ENCODE measurements at regions of chr1 and their contacts with region 1.

Region 1: DNA sequence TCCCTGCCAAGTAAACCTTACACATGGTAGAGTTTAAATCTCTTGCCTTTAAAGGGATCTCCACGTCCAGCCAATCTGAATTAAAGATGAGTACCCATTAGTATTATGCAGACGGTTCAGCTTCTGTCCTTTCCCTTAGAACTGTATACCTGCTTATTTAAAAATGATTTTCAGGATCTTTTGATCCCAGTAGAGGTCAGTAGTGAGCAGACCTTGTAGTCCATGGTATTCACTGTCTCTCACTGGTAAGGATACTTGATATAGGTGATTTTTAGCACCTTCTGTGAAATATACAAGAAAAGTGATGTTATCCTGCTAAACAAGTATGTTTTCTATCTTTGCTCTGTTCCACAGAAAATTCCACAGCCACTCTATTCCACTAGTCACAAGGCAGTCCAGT is 1211.6 kb upstream of the ADGRL4 start:
- DNase-seq: peak; percentile 76
- H3K4me3 Mint-ChIP-seq: no peak overlapping the region
- H3K27ac Mint-ChIP-seq: peak overlapping the region; percentile 91
- H3K4me1 Mint-ChIP-seq: peaks cover 13% of the 10 kb centered on the region
- H3K27me3 Mint-ChIP-seq: no peaks in the 10 kb centered on the region
- CTCF ChIP-seq: peak; percentile 59

Region 2: GRCh38 chr1:79259388-79260336 is 958.5 kb before region 1 on chr1:
- CTCF ChIA-PET with region 1: interaction called, 4 read pairs
- POLR2A ChIA-PET with region 1: no interaction called
- intact Hi-C with region 1: loop called (anchors 5 kb)
- DNase-seq: peak; percentile 57
- H3K4me3 Mint-ChIP-seq: no peak overlapping the region
- H3K27ac Mint-ChIP-seq: no peak overlapping the region
- H3K4me1 Mint-ChIP-seq: no peaks in the 10 kb centered on the region
- H3K27me3 Mint-ChIP-seq: no peaks in the 10 kb centered on the region
- CTCF ChIP-seq: peak; percentile 62

Region 3: GRCh38 chr1:80375677-80376076 is 157.6 kb after region 1 on chr1:
- CTCF ChIA-PET with region 1: no interaction called
- POLR2A ChIA-PET with region 1: no interaction called
- intact Hi-C with region 1: no loop called
- DNase-seq: peak; percentile 47
- H3K4me3 Mint-ChIP-seq: no peak overlapping the region
- H3K27ac Mint-ChIP-seq: peak overlapping the region; percentile 2
- H3K4me1 Mint-ChIP-seq: peaks cover 16% of the 10 kb centered on the region
- H3K27me3 Mint-ChIP-seq: no peaks in the 10 kb centered on the region
- CTCF ChIP-seq: no peak

Region 4: GRCh38 chr1:80427881-80428280 is 209.8 kb after region 1 on chr1:
- CTCF ChIA-PET with region 1: no interaction called
- POLR2A ChIA-PET with region 1: no interaction called
- intact Hi-C with region 1: loop called (anchors 10 kb)
- DNase-seq: no peak
- H3K4me3 Mint-ChIP-seq: no peak overlapping the region
- H3K27ac Mint-ChIP-seq: no peak overlapping the region
- H3K4me1 Mint-ChIP-seq: no peaks in the 10 kb centered on the region
- H3K27me3 Mint-ChIP-seq: no peaks in the 10 kb centered on the region
- CTCF ChIP-seq: no peak

Region 5: DNA sequence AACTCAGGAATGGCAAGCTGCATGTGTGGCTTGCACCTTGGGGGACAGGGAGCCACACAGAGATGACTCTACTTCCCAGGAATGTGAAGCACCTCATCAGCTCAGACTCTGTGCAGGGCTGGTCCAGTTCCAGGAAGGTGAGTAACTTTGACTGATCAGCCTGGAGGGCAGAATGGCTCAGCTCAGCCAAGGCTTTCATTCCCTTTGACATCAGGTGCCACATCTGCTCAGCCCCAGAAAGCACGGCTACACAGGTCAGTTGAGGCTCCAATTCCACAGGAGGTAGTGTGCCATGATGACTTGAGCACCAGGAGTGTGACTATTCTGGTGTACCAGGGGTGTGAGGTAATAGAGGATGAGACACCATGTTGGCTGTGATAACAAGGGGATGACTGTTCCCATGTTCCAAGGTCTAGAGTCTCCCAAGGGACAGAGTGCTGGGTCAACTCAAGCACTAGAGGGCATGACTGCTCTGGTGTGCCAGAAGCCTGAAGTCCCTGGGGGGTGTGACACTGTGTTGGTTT is 956.8 kb after region 1 on chr1:
- CTCF ChIA-PET with region 1: no interaction called
- POLR2A ChIA-PET with region 1: no interaction called
- intact Hi-C with region 1: loop called (anchors 2 kb)
- DNase-seq: peak; percentile 98
- H3K4me3 Mint-ChIP-seq: peak overlapping the region; percentile 16
- H3K27ac Mint-ChIP-seq: peak overlapping the region; percentile 74
- H3K4me1 Mint-ChIP-seq: peaks cover 36% of the 10 kb centered on the region
- H3K27me3 Mint-ChIP-seq: no peaks in the 10 kb centered on the region
- CTCF ChIP-seq: no peak

Region 6: GRCh38 chr1:81549604-81550127 is 1331.6 kb after region 1 on chr1:
- CTCF ChIA-PET with region 1: no interaction called
- POLR2A ChIA-PET with region 1: no interaction called
- intact Hi-C with region 1: loop called (anchors 5 kb)
- DNase-seq: peak; percentile 61
- H3K4me3 Mint-ChIP-seq: no peak overlapping the region
- H3K27ac Mint-ChIP-seq: no peak overlapping the region
- H3K4me1 Mint-ChIP-seq: no peaks in the 10 kb centered on the region
- H3K27me3 Mint-ChIP-seq: no peaks in the 10 kb centered on the region
- CTCF ChIP-seq: peak; percentile 60

Region 7: GRCh38 chr1:81800695-81801650 is 1582.9 kb after region 1 on chr1 and contains the start of gene ADGRL2:
- CTCF ChIA-PET with region 1: no interaction called
- POLR2A ChIA-PET with region 1: interaction called, 4 read pairs
- intact Hi-C with region 1: loop called (anchors 5 kb)
- DNase-seq: peak; percentile 93
- H3K4me3 Mint-ChIP-seq: peak within 1 kb of the TSS; percentile 98
- H3K27ac Mint-ChIP-seq: peak within 1 kb of the TSS; percentile 69
- H3K4me1 Mint-ChIP-seq: peaks cover 7% of the 10 kb centered on the region
- H3K27me3 Mint-ChIP-seq: peaks cover 33% of the 10 kb centered on the region
- CTCF ChIP-seq: no peak
- total RNA-seq, gene ADGRL2: 3.0 and 3.4 TPM in 2 replicates

Measured in MCF 10A (cell line).